ENCODE measurements at regions of chr4 and their contacts with region 1.

Region 1: DNA sequence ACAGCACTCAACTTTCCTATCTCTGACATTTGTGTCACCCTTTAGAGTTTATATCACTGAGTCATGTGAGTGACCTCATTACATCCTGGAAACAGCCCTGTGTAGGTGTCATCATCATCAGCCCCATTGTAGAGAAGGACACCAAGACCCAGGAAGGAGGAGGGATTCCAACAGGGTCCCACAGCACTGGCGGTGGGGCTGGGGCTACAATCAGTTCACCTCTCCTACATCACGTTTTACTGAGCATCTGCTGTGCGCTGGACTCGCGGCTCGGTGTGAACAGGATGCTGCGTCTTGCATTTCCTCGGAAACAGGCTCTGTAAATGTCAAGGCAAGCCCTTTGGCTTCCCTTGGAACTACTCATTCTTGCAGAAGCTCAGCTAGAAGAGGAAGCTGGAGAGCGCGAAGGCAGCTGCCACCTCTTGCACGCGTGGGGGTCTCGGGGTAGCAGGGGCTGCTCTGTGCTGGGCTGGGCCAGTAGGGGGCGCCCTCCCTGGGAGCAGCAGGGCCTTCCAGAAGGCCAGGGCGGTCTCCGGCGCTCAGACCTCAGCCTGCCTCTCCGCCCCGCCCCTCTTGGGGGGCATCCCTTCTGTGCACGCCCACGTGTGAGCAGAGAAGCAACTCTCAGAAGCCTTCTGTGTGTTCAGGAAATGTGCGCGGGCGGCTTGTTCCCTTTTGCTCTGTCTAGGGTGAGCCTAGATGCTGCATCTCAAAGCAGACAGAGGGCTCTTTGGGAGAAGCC is 29.0 kb downstream of the REELD1 start:
- DNase-seq: peak; percentile 87
- CTCF ChIP-seq: peak; percentile 92

Region 2: GRCh38 chr4:146232131-146232722 is 11.1 kb before region 1 on chr4:
- CTCF ChIA-PET with region 1: interaction called, 12 read pairs
- POLR2A ChIA-PET with region 1: no interaction called
- DNase-seq: no peak
- CTCF ChIP-seq: no peak